Colonic mucosa (tissue), 4 donors: ENCODE measurements at regions of chr4 and their contacts with region 1.

Region 1: GRCh38 chr4:150010525-150011126 is 67.6 kb upstream of the DCLK2 start:
- DNase-seq: peak; percentile 42
- H3K4me3 ChIP-seq: no peak overlapping the region
- H3K27ac ChIP-seq: no peak overlapping the region
- H3K4me1 ChIP-seq: no peaks in the 10 kb centered on the region
- H3K27me3 ChIP-seq: no peaks in the 10 kb centered on the region
- CTCF ChIP-seq: peak; percentile 27

Region 2: GRCh38 chr4:150240011-150240410 is 229.4 kb after region 1 on chr4:
- intact Hi-C with region 1: loop called (anchors 2 kb)
- DNase-seq: no peak
- H3K4me3 ChIP-seq: no peak overlapping the region
- H3K27ac ChIP-seq: no peak overlapping the region
- H3K4me1 ChIP-seq: no peaks in the 10 kb centered on the region
- H3K27me3 ChIP-seq: no peaks in the 10 kb centered on the region
- CTCF ChIP-seq: no peak